ENCODE measurements at regions of chr5 and their contacts with region 1.

Region 1: DNA sequence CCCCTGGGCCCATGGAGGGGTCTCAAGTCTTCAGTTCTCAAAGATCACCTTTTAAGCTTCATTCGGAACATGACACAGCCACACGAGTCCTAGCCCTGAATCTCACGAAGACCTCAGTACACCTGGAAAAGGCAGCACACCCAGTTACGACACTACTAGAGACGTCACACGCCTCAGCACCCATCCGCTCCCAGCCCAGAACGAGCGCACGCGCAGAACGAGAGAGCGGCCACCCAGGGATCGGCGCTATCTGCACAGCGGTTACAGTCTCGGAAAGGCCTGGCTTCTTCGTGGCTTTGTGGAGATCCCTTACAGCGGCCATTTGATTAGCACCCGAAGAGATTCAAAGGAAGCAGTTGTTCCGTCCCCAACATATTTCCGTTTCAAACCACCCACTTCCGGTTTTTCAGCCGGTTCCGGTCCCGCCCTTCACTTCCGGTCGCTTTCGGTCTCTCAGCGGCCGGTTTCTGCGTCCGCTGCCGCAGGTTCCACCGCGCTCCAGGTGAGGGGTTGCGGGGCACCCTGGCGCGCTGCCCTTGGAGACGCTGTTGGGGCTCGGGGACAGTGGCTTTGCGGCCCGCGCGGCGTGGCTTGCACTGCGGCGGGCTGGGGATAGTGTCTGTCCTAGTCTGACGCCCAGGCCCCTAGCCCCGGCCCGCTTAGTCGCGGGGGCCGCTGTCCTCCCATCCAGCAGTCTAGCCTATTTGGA is at the start of gene UBLCP1:
- H3K4me3 Mint-ChIP-seq: peak within 1 kb of the TSS; percentile 98
- H3K27ac Mint-ChIP-seq: peak within 1 kb of the TSS; percentile 95
- H3K4me1 Mint-ChIP-seq: peaks cover 24% of the 10 kb centered on the region
- H3K27me3 Mint-ChIP-seq: peaks cover 13% of the 10 kb centered on the region

Region 2: GRCh38 chr5:159156426-159157238 is 106.4 kb before region 1 on chr5:
- intact Hi-C with region 1: loop called (anchors 2 kb)
- H3K4me3 Mint-ChIP-seq: no peak overlapping the region
- H3K27ac Mint-ChIP-seq: no peak overlapping the region
- H3K4me1 Mint-ChIP-seq: no peaks in the 10 kb centered on the region
- H3K27me3 Mint-ChIP-seq: no peaks in the 10 kb centered on the region

Region 3: DNA sequence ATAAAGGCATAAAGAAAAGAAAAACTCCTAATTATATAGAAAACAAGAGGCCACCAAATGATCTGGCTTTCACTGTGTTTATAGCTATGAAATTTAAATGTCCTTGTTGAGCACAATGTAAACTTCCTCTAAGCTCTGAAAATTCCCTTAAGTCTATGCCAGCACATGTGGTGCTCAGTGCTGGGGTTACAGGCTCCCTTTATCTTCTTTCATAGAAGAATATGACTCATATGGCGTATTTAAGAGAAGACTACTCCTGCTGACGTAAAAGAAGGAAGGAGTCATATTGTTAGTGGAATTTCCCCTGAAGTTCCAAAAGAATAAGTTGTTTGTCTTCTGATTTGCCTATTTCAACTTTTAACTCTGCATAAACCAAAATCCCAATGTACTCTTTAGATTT is 84.0 kb before region 1 on chr5:
- intact Hi-C with region 1: loop called (anchors 5 kb)
- H3K4me3 Mint-ChIP-seq: no peak overlapping the region
- H3K27ac Mint-ChIP-seq: peak overlapping the region; percentile 84
- H3K4me1 Mint-ChIP-seq: peaks cover 19% of the 10 kb centered on the region
- H3K27me3 Mint-ChIP-seq: no peaks in the 10 kb centered on the region

Region 4: GRCh38 chr5:159209438-159210305 is 53.3 kb before region 1 on chr5 and contains the start of gene RNF145:
- intact Hi-C with region 1: loop called (anchors 5 kb)
- H3K4me3 Mint-ChIP-seq: peak within 1 kb of the TSS; percentile 99
- H3K27ac Mint-ChIP-seq: peak within 1 kb of the TSS; percentile 100
- H3K4me1 Mint-ChIP-seq: peaks cover 69% of the 10 kb centered on the region
- H3K27me3 Mint-ChIP-seq: no peaks in the 10 kb centered on the region